Breast epithelium (tissue), 4 donors: ENCODE measurements at regions of chr4 and their contacts with region 1.

Region 1: GRCh38 chr4:162959046-162959445 is 207.6 kb downstream of the NAF1 start:
- DNase-seq: no peak
- H3K4me3 ChIP-seq: no peak overlapping the region
- H3K27ac ChIP-seq: no peak overlapping the region
- H3K4me1 ChIP-seq: no peaks in the 10 kb centered on the region
- H3K27me3 ChIP-seq: no peaks in the 10 kb centered on the region
- CTCF ChIP-seq: no peak
- POLR2A ChIP-seq: no peak

Region 2: GRCh38 chr4:163284304-163284703 is 325.3 kb after region 1 on chr4:
- intact Hi-C with region 1: loop called (anchors 5 kb)
- DNase-seq: no peak
- H3K4me3 ChIP-seq: no peak overlapping the region
- H3K27ac ChIP-seq: no peak overlapping the region
- H3K4me1 ChIP-seq: no peaks in the 10 kb centered on the region
- H3K27me3 ChIP-seq: no peaks in the 10 kb centered on the region
- CTCF ChIP-seq: no peak
- POLR2A ChIP-seq: no peak